ENCODE measurements at regions of chrX and their contacts with region 1.

Region 1: GRCh38 chrX:56563231-56564161 is at the start of gene UBQLN2:
- DNase-seq: peak; percentile 69
- H3K4me3 ChIP-seq: peak within 1 kb of the TSS; percentile 32 to 53 (median 53)
- H3K27ac ChIP-seq: peak within 1 kb of the TSS; percentile 79
- H3K4me1 ChIP-seq: no peaks in the 10 kb centered on the region
- H3K27me3 ChIP-seq: no peaks in the 10 kb centered on the region
- CTCF ChIP-seq: peak in 1 of 2 donors; percentile 12
- total RNA-seq, gene UBQLN2: 19.0 to 32.8 TPM

Region 2: DNA sequence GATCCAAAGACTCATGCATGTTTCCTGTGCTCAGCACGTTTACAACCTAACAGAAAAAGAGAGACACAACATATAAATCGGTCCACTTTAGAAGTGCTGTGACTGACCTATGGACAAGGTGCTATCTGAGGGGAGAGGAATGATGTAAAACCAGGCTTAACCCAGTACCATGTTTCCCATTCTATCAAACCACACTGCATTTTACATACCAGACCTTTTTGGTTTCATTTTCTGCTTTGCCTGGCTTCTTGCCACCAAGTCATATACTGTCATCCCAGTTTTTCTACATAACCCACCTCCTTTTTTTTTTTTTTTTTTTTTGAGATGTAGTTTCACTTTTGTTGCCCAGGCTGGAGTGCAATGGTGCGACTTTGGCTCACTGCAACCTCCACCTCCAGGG is 249.2 kb before region 1 on chrX:
- CTCF ChIA-PET with region 1: no interaction called
- dilution Hi-C with region 1: no loop called
- in situ Hi-C with region 1: loop called in 1 of 2 experiments (anchors 25 kb)
- intact Hi-C with region 1: no loop called
- DNase-seq: no peak
- H3K4me3 ChIP-seq: no peak overlapping the region
- H3K27ac ChIP-seq: no peak overlapping the region
- H3K4me1 ChIP-seq: no peaks in the 10 kb centered on the region
- H3K27me3 ChIP-seq: no peaks in the 10 kb centered on the region
- CTCF ChIP-seq: no peak

Region 3: DNA sequence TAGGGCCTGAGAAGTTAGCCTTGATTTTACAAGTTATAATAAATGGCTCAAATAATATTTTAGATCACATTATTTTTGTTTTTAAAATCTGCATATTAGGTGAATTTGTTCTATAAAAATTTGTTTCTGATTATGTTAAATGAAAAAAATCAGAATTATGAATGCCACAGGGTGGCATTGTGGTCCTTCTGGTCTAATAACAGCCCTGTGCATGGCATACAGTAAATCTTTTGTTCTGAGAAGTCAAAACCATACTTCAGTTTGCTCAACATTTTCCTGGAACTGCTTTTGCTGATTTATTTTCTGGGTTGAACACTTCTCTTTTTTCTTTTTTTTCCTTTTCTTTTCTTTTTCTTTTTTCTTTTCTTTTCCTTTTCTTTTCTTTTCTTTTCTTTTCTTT is 101.1 kb before region 1 on chrX:
- CTCF ChIA-PET with region 1: no interaction called
- dilution Hi-C with region 1: no loop called
- in situ Hi-C with region 1: loop called in 1 of 2 experiments (anchors 25 kb)
- intact Hi-C with region 1: loop called (anchors 1 kb)
- DNase-seq: no peak
- H3K4me3 ChIP-seq: no peak overlapping the region
- H3K27ac ChIP-seq: no peak overlapping the region
- H3K4me1 ChIP-seq: no peaks in the 10 kb centered on the region
- H3K27me3 ChIP-seq: peaks cover 8% of the 10 kb centered on the region
- CTCF ChIP-seq: no peak

Region 4: GRCh38 chrX:56499372-56499771 is 64.1 kb before region 1 on chrX:
- CTCF ChIA-PET with region 1: no interaction called
- dilution Hi-C with region 1: no loop called
- in situ Hi-C with region 1: no loop called
- intact Hi-C with region 1: loop called (anchors 2 kb)
- DNase-seq: peak; percentile 84
- H3K4me3 ChIP-seq: no peak overlapping the region
- H3K27ac ChIP-seq: peak overlapping the region; percentile 69
- H3K4me1 ChIP-seq: peaks cover 9% of the 10 kb centered on the region
- H3K27me3 ChIP-seq: no peaks in the 10 kb centered on the region
- CTCF ChIP-seq: no peak

Region 5: GRCh38 chrX:56729152-56729850 is 165.8 kb after region 1 on chrX and contains the start of gene NBDY:
- CTCF ChIA-PET with region 1: no interaction called
- dilution Hi-C with region 1: no loop called
- in situ Hi-C with region 1: no loop called
- intact Hi-C with region 1: loop called (anchors 2 kb)
- DNase-seq: peak; percentile 60
- H3K4me3 ChIP-seq: peak within 1 kb of the TSS; percentile 53 to 72 (median 69)
- H3K27ac ChIP-seq: peak within 1 kb of the TSS; percentile 65
- H3K4me1 ChIP-seq: no peaks in the 10 kb centered on the region
- H3K27me3 ChIP-seq: no peaks in the 10 kb centered on the region
- CTCF ChIP-seq: no peak
- total RNA-seq, gene NBDY: 12.5 to 54.3 TPM

Region 6: DNA sequence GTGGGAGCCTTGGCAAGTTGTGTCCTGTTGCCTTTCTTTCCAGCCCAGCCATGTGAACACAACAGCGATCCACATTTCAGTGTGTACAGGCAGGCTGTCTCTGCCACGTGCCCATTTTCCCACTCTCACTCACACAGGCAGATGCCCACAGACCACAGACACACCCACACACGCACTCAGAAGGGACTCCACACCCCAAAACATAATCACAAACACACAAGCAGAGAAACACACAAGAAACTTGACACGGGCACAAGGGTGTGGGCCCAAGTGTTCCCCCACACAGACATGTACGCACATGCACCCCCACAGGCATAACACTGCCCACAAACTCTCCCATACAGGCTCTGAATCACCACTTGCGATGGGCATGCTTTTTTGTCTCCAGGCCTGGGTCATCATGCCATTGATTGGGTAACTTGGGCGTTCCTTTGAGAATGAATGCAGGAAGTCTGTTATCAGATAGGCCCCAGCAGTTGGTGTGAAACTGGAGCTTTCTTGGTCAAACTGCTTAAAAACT is 249.9 kb after region 1 on chrX:
- CTCF ChIA-PET with region 1: no interaction called
- dilution Hi-C with region 1: no loop called
- in situ Hi-C with region 1: no loop called
- intact Hi-C with region 1: loop called (anchors 5 kb)
- DNase-seq: peak; percentile 96
- H3K4me3 ChIP-seq: no peak overlapping the region
- H3K27ac ChIP-seq: peak overlapping the region; percentile 77
- H3K4me1 ChIP-seq: peaks cover 10% of the 10 kb centered on the region
- H3K27me3 ChIP-seq: no peaks in the 10 kb centered on the region
- CTCF ChIP-seq: no peak